Activated CD4-positive, alpha-beta T cell treated with anti-CD3 and anti-CD28 coated beads, Interleukin-2, amount 10 ng/mL, durations not matched to agents 24 days and 14 days (primary cell): ENCODE measurements at regions of chrX and their contacts with region 1.

Region 1: GRCh38 chrX:124300405-124300804 is 32.1 kb upstream of the TEX13D start:
- DNase-seq: peak; percentile 50
- H3K4me3 Mint-ChIP-seq: no peak overlapping the region
- H3K27ac Mint-ChIP-seq: peak overlapping the region; percentile 65
- H3K4me1 Mint-ChIP-seq: peaks cover 14% of the 10 kb centered on the region
- H3K27me3 Mint-ChIP-seq: no peaks in the 10 kb centered on the region

Region 2: DNA sequence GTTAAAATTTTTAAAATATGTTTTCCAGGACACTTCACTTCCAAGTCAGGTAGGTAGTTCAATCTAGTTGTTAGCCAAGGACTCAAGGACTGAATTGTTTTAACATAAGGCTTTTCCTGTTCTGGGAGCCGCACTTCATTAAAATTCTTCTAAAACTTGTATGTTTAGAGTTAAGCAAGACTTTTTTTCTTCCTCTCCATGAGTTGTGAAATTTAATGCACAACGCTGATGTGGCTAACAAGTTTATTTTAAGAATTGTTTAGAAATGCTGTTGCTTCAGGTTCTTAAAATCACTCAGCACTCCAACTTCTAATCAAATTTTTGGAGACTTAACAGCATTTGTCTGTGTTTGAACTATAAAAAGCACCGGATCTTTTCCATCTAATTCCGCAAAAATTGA is 390.9 kb before region 1 on chrX:
- intact Hi-C with region 1: no loop called
- DNase-seq: no peak
- H3K4me3 Mint-ChIP-seq: no peak overlapping the region
- H3K27ac Mint-ChIP-seq: no peak overlapping the region
- H3K4me1 Mint-ChIP-seq: peaks cover 9% of the 10 kb centered on the region
- H3K27me3 Mint-ChIP-seq: no peaks in the 10 kb centered on the region

Region 3: DNA sequence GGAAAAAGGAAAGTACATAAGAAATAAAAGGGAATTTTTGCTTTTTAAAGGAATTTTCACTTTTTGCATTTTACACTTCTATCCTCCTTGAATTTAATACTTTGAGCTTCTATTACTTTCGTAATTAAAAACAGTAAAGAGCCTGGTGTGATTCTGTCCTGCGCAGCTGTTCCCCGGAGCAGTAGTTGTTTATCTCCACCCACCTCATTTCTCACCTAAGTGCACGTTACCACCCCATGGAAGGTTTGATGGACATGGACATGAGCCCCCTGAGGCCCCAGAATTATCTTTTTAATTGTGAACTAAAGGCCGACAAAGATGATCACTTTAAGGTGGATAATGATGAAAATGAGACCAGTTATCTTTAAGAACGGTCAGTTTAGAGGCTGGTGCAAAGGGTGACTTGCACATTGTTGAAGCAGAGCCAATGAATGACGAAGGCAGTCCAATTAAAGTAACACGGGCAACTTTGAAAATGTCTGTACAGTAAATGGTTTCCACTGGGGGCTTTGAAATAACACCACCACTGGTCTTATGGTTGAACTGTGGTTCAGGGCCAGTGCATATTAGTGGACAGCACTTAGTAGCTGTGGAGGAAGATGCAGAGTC is 20.0 kb before region 1 on chrX:
- intact Hi-C with region 1: loop called (anchors 2 kb)
- DNase-seq: no peak
- H3K4me3 Mint-ChIP-seq: peak overlapping the region; percentile 49
- H3K27ac Mint-ChIP-seq: peak overlapping the region; percentile 83
- H3K4me1 Mint-ChIP-seq: peaks cover 17% of the 10 kb centered on the region
- H3K27me3 Mint-ChIP-seq: no peaks in the 10 kb centered on the region